HepG2 (cell line): ENCODE measurements at regions of chr14 and their contacts with region 1.

Region 1: DNA sequence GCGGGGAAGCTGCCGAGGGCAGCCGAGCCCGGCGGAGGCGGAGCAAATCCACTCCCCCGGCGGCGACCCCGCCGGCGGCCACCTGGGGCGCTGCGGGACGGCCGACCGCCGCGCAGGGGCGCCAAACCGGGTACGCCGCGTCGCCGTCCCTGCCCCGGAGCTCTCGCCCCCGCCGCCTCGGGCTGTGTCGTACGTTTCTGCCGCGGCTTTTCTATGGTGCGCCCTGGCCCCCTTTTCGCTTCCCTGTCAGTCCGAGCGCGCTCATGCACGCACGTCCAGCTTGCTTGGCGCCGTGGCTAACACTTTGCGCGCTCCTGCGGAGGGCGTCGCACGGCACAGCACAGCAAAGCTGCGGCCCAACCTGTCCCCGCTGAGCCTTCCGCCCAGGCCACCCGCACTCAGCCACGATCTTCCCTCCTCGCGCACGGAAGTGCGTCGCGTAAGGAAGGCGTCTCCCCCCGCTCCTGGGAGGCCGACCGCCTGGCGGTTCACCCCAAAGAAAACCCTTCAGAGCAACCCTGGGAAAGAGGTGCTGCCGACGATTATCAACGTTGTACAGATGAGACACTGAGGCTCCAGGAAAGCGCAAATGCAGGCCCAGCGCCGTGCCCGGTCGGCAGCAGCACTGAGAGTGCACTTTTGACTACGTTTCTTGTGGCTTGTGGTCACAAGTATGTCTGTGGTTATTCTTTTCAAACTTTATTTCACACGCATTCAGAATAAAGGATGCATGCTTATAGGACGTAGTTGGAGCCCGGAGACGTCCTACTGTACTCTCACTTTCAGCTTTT is at the start of gene HECTD1:
- DNase-seq: peak; percentile 93
- ATAC-seq: peak; percentile 86
- H3K4me3 ChIP-seq: peak within 1 kb of the TSS; percentile 89 to 96 (median 95)
- H3K27ac ChIP-seq: peak within 1 kb of the TSS; percentile 94
- H3K4me1 ChIP-seq: peaks cover 35% of the 10 kb centered on the region
- H3K27me3 ChIP-seq: no peaks in the 10 kb centered on the region; a peak in 1 of 5 replicates
- CTCF ChIP-seq: peak; percentile 87
- EP300 ChIP-seq: peak; percentile 52 to 68
- POLR2A ChIP-seq: peak in 1 of 2 experiments; percentile 97; a peak in 2 of 4 replicates
- RAD21 ChIP-seq: peak; percentile 100
- total RNA-seq, gene HECTD1: 560 and 761 TPM in 2 replicates

Region 2: DNA sequence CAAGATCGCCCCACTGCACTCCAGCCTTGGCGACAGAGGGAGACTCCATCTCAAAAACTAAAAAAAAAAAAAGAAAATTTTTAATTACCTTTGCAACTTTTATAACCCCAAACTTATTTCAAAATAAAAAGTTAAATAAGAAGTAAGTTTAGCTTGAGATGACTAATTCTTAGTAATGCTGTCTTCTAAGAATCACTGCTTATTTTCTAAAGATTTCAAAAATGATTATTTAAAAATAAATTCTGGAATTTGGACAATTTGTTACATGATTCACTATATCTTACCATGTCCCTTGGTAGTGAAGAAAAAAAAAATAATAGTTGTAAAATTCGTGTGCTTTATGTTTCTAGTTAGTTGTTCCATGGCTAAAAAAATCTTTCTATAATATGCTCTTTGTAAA is 11.2 kb after region 1 on chr14:
- CTCF ChIA-PET with region 1: no interaction called
- POLR2A ChIA-PET with region 1: interaction called, 42 read pairs
- in situ Hi-C with region 1: no loop called
- intact Hi-C with region 1: no loop called
- DNase-seq: no peak
- ATAC-seq: no peak
- H3K4me3 ChIP-seq: no peak overlapping the region
- H3K27ac ChIP-seq: no peak overlapping the region
- H3K4me1 ChIP-seq: peaks cover 27% of the 10 kb centered on the region
- H3K27me3 ChIP-seq: no peaks in the 10 kb centered on the region
- CTCF ChIP-seq: no peak
- EP300 ChIP-seq: no peak
- POLR2A ChIP-seq: no peak
- RAD21 ChIP-seq: no peak

Region 3: GRCh38 chr14:31263485-31264133 is 55.7 kb after region 1 on chr14:
- CTCF ChIA-PET with region 1: interaction called, 7 read pairs
- POLR2A ChIA-PET with region 1: interaction called, 323 read pairs
- in situ Hi-C with region 1: loop called (anchors 5 kb)
- intact Hi-C with region 1: loop called (anchors 1 kb)
- DNase-seq: peak; percentile 91
- ATAC-seq: peak; percentile 73
- H3K4me3 ChIP-seq: no peak overlapping the region; a peak in 1 of 6 replicates
- H3K27ac ChIP-seq: peak overlapping the region; percentile 89
- H3K4me1 ChIP-seq: peaks cover 86% of the 10 kb centered on the region
- H3K27me3 ChIP-seq: no peaks in the 10 kb centered on the region; a peak in 1 of 5 replicates
- CTCF ChIP-seq: no peak
- EP300 ChIP-seq: peak in 1 of 2 experiments; percentile 54; a peak in 2 of 4 replicates
- POLR2A ChIP-seq: no peak
- RAD21 ChIP-seq: peak; percentile 28; the same call in 1 of the 2 replicates

Region 4: DNA sequence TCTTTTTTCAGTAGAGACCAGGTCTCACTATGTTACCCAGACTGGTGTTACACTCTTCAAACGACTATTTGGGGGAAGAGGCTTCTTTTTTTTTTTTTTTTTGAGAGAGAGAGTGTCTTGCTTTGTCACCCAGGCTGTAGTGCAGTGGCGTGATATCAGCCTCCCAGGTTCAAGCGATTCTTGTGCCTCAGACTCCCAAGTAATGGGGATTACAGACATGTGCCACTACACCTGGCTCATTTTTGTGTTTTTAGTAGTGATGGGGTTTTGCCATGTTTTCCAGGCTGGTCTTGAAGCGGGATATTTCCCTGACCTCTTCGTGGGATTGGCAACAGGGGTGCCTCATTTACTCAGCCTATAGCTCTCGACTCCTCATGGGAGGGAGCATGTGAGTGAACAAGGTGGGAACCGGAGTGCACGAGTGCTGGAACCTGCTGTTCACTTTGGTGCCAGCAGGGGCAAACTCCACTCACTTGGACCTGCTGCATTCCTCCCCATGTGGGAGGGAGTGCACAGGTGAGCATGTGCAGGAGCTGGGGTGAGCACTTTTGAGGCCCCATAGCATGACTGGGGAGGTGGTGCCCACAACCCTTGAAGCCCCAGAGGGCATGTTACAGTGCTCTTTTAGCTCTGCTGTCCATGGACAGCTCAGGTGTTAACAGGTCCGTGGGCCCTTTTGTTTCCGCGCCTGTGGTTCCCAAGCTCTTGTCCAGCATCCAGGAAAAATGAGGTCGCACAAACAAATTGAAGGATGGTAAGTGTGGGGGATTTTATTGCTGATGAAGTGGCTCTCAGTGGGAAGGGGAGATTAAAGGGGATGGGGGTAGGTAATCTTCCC is 78.7 kb after region 1 on chr14:
- CTCF ChIA-PET with region 1: interaction called, 13 read pairs
- POLR2A ChIA-PET with region 1: interaction called, 23 read pairs
- in situ Hi-C with region 1: no loop called
- intact Hi-C with region 1: loop called (anchors 1 kb)
- DNase-seq: peak; percentile 83
- ATAC-seq: peak; percentile 99
- H3K4me3 ChIP-seq: no peak overlapping the region
- H3K27ac ChIP-seq: no peak overlapping the region
- H3K4me1 ChIP-seq: peaks cover 34% of the 10 kb centered on the region
- H3K27me3 ChIP-seq: no peaks in the 10 kb centered on the region
- CTCF ChIP-seq: peak; percentile 96
- EP300 ChIP-seq: no peak
- POLR2A ChIP-seq: no peak
- RAD21 ChIP-seq: peak; percentile 92

Region 5: GRCh38 chr14:31360919-31361662 is 153.1 kb after region 1 on chr14:
- CTCF ChIA-PET with region 1: interaction called, 15 read pairs
- POLR2A ChIA-PET with region 1: interaction called, 3 read pairs
- in situ Hi-C with region 1: loop called (anchors 5 kb)
- intact Hi-C with region 1: loop called (anchors 1 kb)
- DNase-seq: no peak
- ATAC-seq: no peak
- H3K4me3 ChIP-seq: no peak overlapping the region
- H3K27ac ChIP-seq: no peak overlapping the region
- H3K4me1 ChIP-seq: peaks cover 8% of the 10 kb centered on the region
- H3K27me3 ChIP-seq: no peaks in the 10 kb centered on the region
- CTCF ChIP-seq: no peak
- EP300 ChIP-seq: no peak
- POLR2A ChIP-seq: no peak
- RAD21 ChIP-seq: no peak

Region 6: GRCh38 chr14:32202998-32203882 is 995.3 kb after region 1 on chr14 and contains the start of gene RNU6-8:
- CTCF ChIA-PET with region 1: no interaction called
- POLR2A ChIA-PET with region 1: no interaction called
- in situ Hi-C with region 1: no loop called
- intact Hi-C with region 1: loop called (anchors 10 kb)
- DNase-seq: peak; percentile 96
- ATAC-seq: peak; percentile 84
- H3K4me3 ChIP-seq: peak within 1 kb of the TSS; percentile 69 to 81 (median 75)
- H3K27ac ChIP-seq: peak within 1 kb of the TSS; percentile 87
- H3K4me1 ChIP-seq: peaks cover 21% of the 10 kb centered on the region
- H3K27me3 ChIP-seq: no peaks in the 10 kb centered on the region; a peak in 1 of 5 replicates
- CTCF ChIP-seq: no peak; the same call in 1 of the 2 replicates
- EP300 ChIP-seq: peak in 1 of 2 experiments; percentile 35; a peak in 1 of 4 replicates
- POLR2A ChIP-seq: peak in 1 of 2 experiments; percentile 66; a peak in 2 of 4 replicates
- RAD21 ChIP-seq: peak; percentile 55
- total RNA-seq, gene RNU6-8: under 0.01 TPM in 1 of 2 replicates, not detected in the other